ENCODE measurements at regions of chr12 and their contacts with region 1.

Region 1: GRCh38 chr12:123601602-123602489 is at the start of gene DDX55:
- DNase-seq: peak; percentile 73
- ATAC-seq: peak; percentile 92
- H3K4me3 ChIP-seq: peak within 1 kb of the TSS; percentile 93 to 100 (median 93)
- H3K27ac ChIP-seq: peak within 1 kb of the TSS; percentile 97
- H3K4me1 ChIP-seq: peaks cover 29% of the 10 kb centered on the region
- H3K27me3 ChIP-seq: no peaks in the 10 kb centered on the region
- CTCF ChIP-seq: peak; percentile 90
- EP300 ChIP-seq: peak; percentile 32 to 42; a peak in 1 of 4 replicates
- POLR2A ChIP-seq: peak; percentile 84 to 98
- RAD21 ChIP-seq: peak; percentile 93
- total RNA-seq, gene DDX55: 29.5 and 37.0 TPM in 2 replicates

Region 2: GRCh38 chr12:123540899-123541662 is 60.8 kb before region 1 on chr12:
- CTCF ChIA-PET with region 1: interaction called, 4 read pairs
- POLR2A ChIA-PET with region 1: interaction called, 10 read pairs
- in situ Hi-C with region 1: no loop called
- intact Hi-C with region 1: no loop called
- DNase-seq: peak; percentile 49
- ATAC-seq: peak; percentile 94
- H3K4me3 ChIP-seq: peak overlapping the region; percentile 48 to 62 (median 61)
- H3K27ac ChIP-seq: no peak overlapping the region
- H3K4me1 ChIP-seq: peaks cover 38% of the 10 kb centered on the region
- H3K27me3 ChIP-seq: peaks cover 0 to 5% of the 10 kb centered on the region in 2 experiments; a peak in 2 of 5 replicates
- CTCF ChIP-seq: peak; percentile 85
- EP300 ChIP-seq: no peak
- POLR2A ChIP-seq: no peak
- RAD21 ChIP-seq: peak; percentile 75

Region 3: DNA sequence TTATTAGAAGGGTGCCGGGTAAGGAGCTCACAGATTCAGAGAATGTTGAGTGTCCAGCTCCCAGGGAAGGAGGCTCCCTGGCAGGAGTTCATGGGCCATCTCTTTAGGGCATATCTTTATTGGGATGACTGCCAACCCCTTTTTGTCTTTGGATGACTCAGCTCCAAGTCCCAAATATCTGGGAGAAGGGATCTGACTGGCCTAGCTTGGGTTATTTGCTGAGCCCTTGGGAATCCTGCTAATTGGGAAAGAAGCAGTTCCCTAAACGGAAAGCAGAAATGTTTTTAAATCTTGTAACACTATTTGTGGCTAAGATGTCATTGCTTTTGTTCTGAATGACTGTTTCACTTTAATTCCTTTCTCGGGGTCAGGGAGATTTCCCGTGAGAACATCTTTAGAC is 12.7 kb after region 1 on chr12:
- CTCF ChIA-PET with region 1: no interaction called
- POLR2A ChIA-PET with region 1: no interaction called
- in situ Hi-C with region 1: no loop called
- intact Hi-C with region 1: no loop called
- DNase-seq: no peak
- ATAC-seq: no peak
- H3K4me3 ChIP-seq: no peak overlapping the region
- H3K27ac ChIP-seq: no peak overlapping the region
- H3K4me1 ChIP-seq: no peaks in the 10 kb centered on the region
- H3K27me3 ChIP-seq: no peaks in the 10 kb centered on the region
- CTCF ChIP-seq: no peak
- EP300 ChIP-seq: no peak
- POLR2A ChIP-seq: no peak
- RAD21 ChIP-seq: no peak

Region 4: DNA sequence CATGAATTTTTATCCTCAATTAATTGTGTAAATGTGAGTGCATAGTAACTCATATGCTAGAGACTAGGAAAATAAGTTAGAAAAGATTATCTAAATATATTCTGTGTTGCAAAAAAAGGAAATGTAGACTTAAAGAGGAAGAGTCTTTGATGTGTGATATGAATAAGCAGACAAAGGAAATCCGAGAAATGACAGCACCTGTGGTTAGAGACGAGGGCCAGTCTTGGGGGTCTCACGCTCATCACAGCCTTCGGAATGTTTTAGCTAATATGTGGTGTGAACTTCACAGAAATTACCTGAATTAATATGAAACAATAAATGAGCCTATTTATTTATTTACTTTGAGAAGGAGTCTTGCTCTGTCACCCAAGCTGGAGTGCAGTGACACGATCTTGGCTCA is 121.9 kb after region 1 on chr12:
- CTCF ChIA-PET with region 1: no interaction called
- POLR2A ChIA-PET with region 1: no interaction called
- in situ Hi-C with region 1: no loop called
- intact Hi-C with region 1: no loop called
- DNase-seq: no peak
- ATAC-seq: no peak
- H3K4me3 ChIP-seq: no peak overlapping the region
- H3K27ac ChIP-seq: no peak overlapping the region
- H3K4me1 ChIP-seq: no peaks in the 10 kb centered on the region
- H3K27me3 ChIP-seq: no peaks in the 10 kb centered on the region
- CTCF ChIP-seq: no peak
- EP300 ChIP-seq: no peak
- POLR2A ChIP-seq: no peak
- RAD21 ChIP-seq: no peak

Region 5: GRCh38 chr12:123761841-123762714 is 160.2 kb after region 1 on chr12 and contains the start of gene DNAH10:
- CTCF ChIA-PET with region 1: no interaction called
- POLR2A ChIA-PET with region 1: no interaction called
- in situ Hi-C with region 1: no loop called
- intact Hi-C with region 1: no loop called
- DNase-seq: peak; percentile 39
- ATAC-seq: peak; percentile 90
- H3K4me3 ChIP-seq: peak within 1 kb of the TSS; percentile 61 to 76 (median 66)
- H3K27ac ChIP-seq: no peak within 1 kb of the TSS
- H3K4me1 ChIP-seq: peaks cover 37% of the 10 kb centered on the region
- H3K27me3 ChIP-seq: peaks cover 0 to 5% of the 10 kb centered on the region in 2 experiments; a peak in 2 of 5 replicates
- CTCF ChIP-seq: peak; percentile 80
- EP300 ChIP-seq: no peak
- POLR2A ChIP-seq: no peak
- RAD21 ChIP-seq: peak; percentile 82
- total RNA-seq, gene DNAH10: 0.02 and 0.06 TPM in 2 replicates